Ascending aorta (tissue), 2 donors: ENCODE measurements at regions of chr1 and their contacts with region 1.

Region 1: GRCh38 chr1:12124693-12125421 is 41.9 kb upstream of the TNFRSF1B start:
- DNase-seq: peak in 1 of 2 donors; percentile 86
- H3K4me3 ChIP-seq: no peak overlapping the region
- H3K27ac ChIP-seq: no peak overlapping the region
- H3K4me1 ChIP-seq: peaks cover 0 to 4% of the 10 kb centered on the region in 2 donors
- H3K27me3 ChIP-seq: no peaks in the 10 kb centered on the region
- CTCF ChIP-seq: peak; percentile 94 to 97 (median 96)

Region 2: DNA sequence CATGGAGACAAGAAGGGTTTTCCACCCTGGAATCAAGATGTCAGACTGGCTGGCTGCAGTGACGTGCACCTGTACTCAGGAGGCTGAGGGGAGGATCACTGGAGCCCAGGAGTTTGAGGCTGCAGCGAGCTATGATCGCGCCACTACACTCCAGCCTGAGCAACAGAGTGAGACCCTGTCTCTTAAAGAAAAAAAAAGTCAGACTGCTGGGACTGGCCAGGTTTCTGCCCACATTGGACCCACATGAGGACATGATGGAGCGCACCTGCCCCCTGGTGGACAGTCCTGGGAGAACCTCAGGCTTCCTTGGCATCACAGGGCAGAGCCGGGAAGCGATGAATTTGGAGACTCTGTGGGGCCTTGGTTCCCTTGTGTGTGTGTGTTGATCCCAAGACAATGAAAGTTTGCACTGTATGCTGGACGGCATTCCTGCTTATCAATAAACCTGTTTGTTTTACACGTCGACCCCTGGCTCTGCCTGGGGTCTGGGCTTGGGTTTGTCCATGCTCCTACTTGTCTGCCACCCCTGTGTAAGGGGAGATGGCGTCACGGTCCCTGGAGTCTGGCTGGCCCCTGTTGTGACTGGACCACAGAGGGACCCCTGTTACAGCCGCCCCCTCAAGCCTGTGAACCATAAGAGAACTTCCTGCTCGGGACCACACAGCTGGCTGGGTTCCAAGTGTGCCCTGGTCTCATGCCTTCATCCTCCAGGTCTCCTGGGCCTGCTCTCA is 84.1 kb after region 1 on chr1:
- intact Hi-C with region 1: loop called (anchors 1 kb)
- DNase-seq: peak in 1 of 2 donors; percentile 91
- H3K4me3 ChIP-seq: no peak overlapping the region
- H3K27ac ChIP-seq: no peak overlapping the region
- H3K4me1 ChIP-seq: no peaks in the 10 kb centered on the region
- H3K27me3 ChIP-seq: no peaks in the 10 kb centered on the region
- CTCF ChIP-seq: peak; percentile 82 to 95 (median 92)